ENCODE measurements at regions of chr9 and their contacts with region 1.

Region 1: GRCh38 chr9:19048966-19049916 is at the start of gene RRAGA:
- DNase-seq: peak; percentile 89
- ATAC-seq: peak; percentile 92
- H3K4me3 ChIP-seq: peak within 1 kb of the TSS; percentile 71 to 88
- H3K27ac ChIP-seq: peak within 1 kb of the TSS; percentile 60
- H3K4me1 ChIP-seq: peaks cover 6 to 21% of the 10 kb centered on the region in 2 experiments; a peak in 3 of 4 replicates
- H3K27me3 ChIP-seq: no peaks in the 10 kb centered on the region
- CTCF ChIP-seq: peak; percentile 80 to 94 (median 85)
- POLR2A ChIP-seq: peak; percentile 56
- RAD21 ChIP-seq: peak; percentile 76
- total RNA-seq, gene RRAGA: 47.3 TPM

Region 2: GRCh38 chr9:18666986-18667772 is 382.1 kb before region 1 on chr9:
- CTCF ChIA-PET with region 1: no interaction called
- POLR2A ChIA-PET with region 1: no interaction called
- RAD21 ChIA-PET with region 1: no interaction called
- intact Hi-C with region 1: no loop called
- DNase-seq: no peak
- ATAC-seq: no peak
- H3K4me3 ChIP-seq: no peak overlapping the region
- H3K27ac ChIP-seq: no peak overlapping the region
- H3K4me1 ChIP-seq: no peaks in the 10 kb centered on the region
- H3K27me3 ChIP-seq: peaks cover 5% of the 10 kb centered on the region; the same call in 1 of the 2 replicates
- CTCF ChIP-seq: no peak
- POLR2A ChIP-seq: no peak
- RAD21 ChIP-seq: no peak

Region 3: DNA sequence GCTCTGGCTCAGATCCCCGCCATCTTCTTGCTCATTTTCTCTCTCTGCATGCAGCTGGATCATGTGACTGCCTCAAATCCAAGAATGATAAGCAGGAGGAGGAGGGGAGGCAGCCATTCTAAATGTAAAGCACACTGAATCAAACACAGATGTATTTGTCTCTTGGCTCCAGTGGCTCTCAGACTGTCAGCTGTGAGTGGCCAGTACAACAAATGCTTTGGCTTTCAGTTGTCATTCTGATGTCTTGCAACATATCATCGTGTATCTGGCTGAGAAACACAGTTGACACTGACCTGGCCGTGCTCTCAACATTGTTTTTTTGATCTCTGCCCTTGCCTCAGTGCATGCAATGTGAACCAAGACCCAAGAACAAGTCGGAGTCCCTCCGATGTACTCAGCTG is 342.2 kb before region 1 on chr9:
- CTCF ChIA-PET with region 1: no interaction called
- POLR2A ChIA-PET with region 1: no interaction called
- RAD21 ChIA-PET with region 1: no interaction called
- intact Hi-C with region 1: no loop called
- DNase-seq: no peak
- ATAC-seq: no peak
- H3K4me3 ChIP-seq: no peak overlapping the region
- H3K27ac ChIP-seq: no peak overlapping the region
- H3K4me1 ChIP-seq: no peaks in the 10 kb centered on the region
- H3K27me3 ChIP-seq: 0 out of 2 replicates have a peak, but pooled peaks cover 3% of the 10 kb centered on the region
- CTCF ChIP-seq: no peak
- POLR2A ChIP-seq: no peak
- RAD21 ChIP-seq: no peak

Region 4: DNA sequence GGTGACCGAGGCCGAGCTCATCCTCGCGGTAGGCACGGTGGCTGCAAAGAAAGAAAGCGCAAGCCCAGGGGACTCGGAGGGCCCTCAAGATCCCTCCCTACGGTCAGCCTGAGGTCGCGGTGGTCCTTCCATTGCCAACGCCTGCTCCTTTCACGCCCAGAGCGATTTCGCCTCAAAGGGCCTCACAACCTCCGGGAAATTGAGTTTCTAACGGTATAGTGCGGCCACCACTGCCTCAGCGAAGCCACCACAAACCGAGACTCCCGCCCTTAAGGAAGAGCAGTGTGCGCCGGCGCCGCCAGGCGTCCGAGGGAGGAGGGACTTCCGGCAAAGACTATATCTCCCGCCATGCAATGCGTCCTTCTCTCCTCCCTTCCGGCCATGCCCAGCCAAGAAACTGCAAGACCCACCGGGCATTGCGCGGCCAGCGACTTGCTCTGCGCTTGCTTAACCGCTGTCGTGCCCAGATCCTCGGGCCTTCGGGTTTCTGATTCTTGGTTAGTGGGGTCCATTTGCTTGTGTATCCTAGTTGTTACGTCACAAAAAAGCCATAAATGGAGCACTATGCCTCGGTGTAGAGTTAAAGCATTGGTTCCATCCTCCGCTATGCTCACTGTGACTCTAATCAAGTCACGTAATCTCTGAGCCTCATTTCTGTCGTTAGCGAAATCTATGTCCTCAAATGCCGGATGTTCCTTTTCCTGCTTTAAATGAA is 53.5 kb after region 1 on chr9 and contains the start of gene HAUS6:
- CTCF ChIA-PET with region 1: no interaction called
- POLR2A ChIA-PET with region 1: no interaction called
- RAD21 ChIA-PET with region 1: no interaction called
- intact Hi-C with region 1: loop called (anchors 1 kb)
- DNase-seq: peak; percentile 91
- ATAC-seq: peak; percentile 94
- H3K4me3 ChIP-seq: peak within 1 kb of the TSS; percentile 84 to 98
- H3K27ac ChIP-seq: peak within 1 kb of the TSS; percentile 57
- H3K4me1 ChIP-seq: peaks cover 10% of the 10 kb centered on the region in 2 experiments; a peak in 2 of 4 replicates
- H3K27me3 ChIP-seq: no peaks in the 10 kb centered on the region
- CTCF ChIP-seq: peak in 2 of 3 experiments; percentile 15 to 50; a peak in 2 of 6 replicates
- POLR2A ChIP-seq: peak; percentile 95
- RAD21 ChIP-seq: no peak
- total RNA-seq, gene HAUS6: 28.8 TPM

Measured in HCT116 (cell line).